Right cardiac atrium (tissue), 5 donors: ENCODE measurements at regions of chr5 and their contacts with region 1.

Region 1: GRCh38 chr5:147935032-147935431 is 28.7 kb upstream of the C5orf46 start:
- DNase-seq: no peak
- ATAC-seq: peak; percentile 83 to 88
- H3K4me3 ChIP-seq: no peak overlapping the region
- H3K27ac ChIP-seq: no peak overlapping the region
- H3K4me1 ChIP-seq: no peaks in the 10 kb centered on the region
- H3K27me3 ChIP-seq: no peaks in the 10 kb centered on the region

Region 2: GRCh38 chr5:147809830-147810666 is 125.0 kb before region 1 on chr5:
- intact Hi-C with region 1: no loop called
- DNase-seq: no peak
- ATAC-seq: no peak
- H3K4me3 ChIP-seq: no peak overlapping the region
- H3K27ac ChIP-seq: no peak overlapping the region
- H3K4me1 ChIP-seq: no peaks in the 10 kb centered on the region
- H3K27me3 ChIP-seq: no peaks in the 10 kb centered on the region

Region 3: DNA sequence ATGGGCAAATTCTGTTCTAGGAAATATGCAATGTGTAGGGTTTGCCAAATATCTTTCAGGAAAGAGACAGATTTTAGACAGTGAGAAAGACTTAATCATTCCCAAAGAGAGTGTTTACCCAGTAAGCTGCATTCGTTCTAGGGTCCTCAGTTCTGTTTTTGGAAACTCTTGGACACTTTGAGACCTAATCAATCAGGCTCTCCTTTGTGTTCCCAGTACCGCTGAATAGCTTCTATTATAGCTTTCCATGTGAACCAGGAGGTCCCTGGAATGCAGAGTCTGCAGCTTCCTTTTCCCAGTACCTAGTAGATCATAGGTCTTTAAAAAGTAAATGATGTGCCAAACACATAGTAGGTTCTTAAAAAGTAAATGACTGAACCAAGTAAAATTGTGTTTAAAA is 92.2 kb before region 1 on chr5:
- intact Hi-C with region 1: no loop called
- DNase-seq: no peak
- ATAC-seq: no peak
- H3K4me3 ChIP-seq: no peak overlapping the region
- H3K27ac ChIP-seq: no peak overlapping the region
- H3K4me1 ChIP-seq: no peaks in the 10 kb centered on the region
- H3K27me3 ChIP-seq: peaks cover 4% of the 10 kb centered on the region

Region 4: GRCh38 chr5:147857302-147858129 is 77.5 kb before region 1 on chr5:
- intact Hi-C with region 1: loop called in 2 of 4 experiments (anchors 5 to 10 kb)
- DNase-seq: peak in 2 of 3 donors; percentile 43 to 69
- ATAC-seq: peak in 1 of 2 donors; percentile 62
- H3K4me3 ChIP-seq: no peak overlapping the region
- H3K27ac ChIP-seq: no peak overlapping the region
- H3K4me1 ChIP-seq: no peaks in the 10 kb centered on the region
- H3K27me3 ChIP-seq: no peaks in the 10 kb centered on the region

Region 5: DNA sequence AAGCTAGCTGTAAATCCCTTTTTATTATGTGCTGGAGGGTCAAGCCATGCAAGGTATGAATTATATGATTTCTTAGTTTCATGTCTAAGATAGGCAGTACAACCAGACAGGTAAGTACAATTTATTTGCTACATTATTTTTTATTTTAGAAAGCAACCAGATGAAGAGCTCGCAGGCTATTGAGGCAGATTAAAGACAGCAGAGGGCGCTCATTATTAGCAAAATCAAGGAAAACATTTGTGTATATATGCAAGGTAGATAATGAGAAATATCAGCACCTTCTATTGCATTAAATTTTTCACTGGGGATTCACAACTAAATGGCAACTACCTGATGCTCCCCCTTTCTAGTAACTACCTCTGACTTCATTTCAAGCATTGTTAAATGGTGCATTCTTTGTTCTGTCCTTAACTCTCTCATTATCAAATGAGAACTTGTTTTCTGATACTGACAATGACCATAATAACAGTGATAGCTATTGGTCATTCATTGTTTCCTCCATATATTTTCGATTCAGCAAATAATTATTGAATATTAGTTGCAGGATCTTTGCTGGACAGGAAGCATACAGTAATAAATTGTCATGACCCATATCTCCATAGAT is 47.9 kb before region 1 on chr5:
- intact Hi-C with region 1: loop called (anchors 5 kb)
- DNase-seq: no peak
- ATAC-seq: no peak
- H3K4me3 ChIP-seq: no peak overlapping the region
- H3K27ac ChIP-seq: no peak overlapping the region
- H3K4me1 ChIP-seq: no peaks in the 10 kb centered on the region
- H3K27me3 ChIP-seq: no peaks in the 10 kb centered on the region